CD4-positive, alpha-beta memory T cell (primary cell): ENCODE measurements at regions of chr7 and their contacts with region 1.

Region 1: GRCh38 chr7:98021588-98022351 is 31.8 kb upstream of the OCM2 start:
- DNase-seq: peak; percentile 61 to 69 (median 64)
- H3K4me3 ChIP-seq: no peak overlapping the region
- H3K4me3 Mint-ChIP-seq: no peak overlapping the region
- H3K27ac ChIP-seq: no peak overlapping the region
- H3K27ac Mint-ChIP-seq: peak overlapping the region in 2 of 7 donors; percentile 34 to 37
- H3K4me1 ChIP-seq: no peaks in the 10 kb centered on the region
- H3K4me1 Mint-ChIP-seq: peaks cover 0 to 5% (median 4%) of the 10 kb centered on the region in 4 donors
- H3K27me3 ChIP-seq: no peaks in the 10 kb centered on the region
- H3K27me3 Mint-ChIP-seq: peaks cover 2 to 13% of the 10 kb centered on the region in 2 donors

Region 2: DNA sequence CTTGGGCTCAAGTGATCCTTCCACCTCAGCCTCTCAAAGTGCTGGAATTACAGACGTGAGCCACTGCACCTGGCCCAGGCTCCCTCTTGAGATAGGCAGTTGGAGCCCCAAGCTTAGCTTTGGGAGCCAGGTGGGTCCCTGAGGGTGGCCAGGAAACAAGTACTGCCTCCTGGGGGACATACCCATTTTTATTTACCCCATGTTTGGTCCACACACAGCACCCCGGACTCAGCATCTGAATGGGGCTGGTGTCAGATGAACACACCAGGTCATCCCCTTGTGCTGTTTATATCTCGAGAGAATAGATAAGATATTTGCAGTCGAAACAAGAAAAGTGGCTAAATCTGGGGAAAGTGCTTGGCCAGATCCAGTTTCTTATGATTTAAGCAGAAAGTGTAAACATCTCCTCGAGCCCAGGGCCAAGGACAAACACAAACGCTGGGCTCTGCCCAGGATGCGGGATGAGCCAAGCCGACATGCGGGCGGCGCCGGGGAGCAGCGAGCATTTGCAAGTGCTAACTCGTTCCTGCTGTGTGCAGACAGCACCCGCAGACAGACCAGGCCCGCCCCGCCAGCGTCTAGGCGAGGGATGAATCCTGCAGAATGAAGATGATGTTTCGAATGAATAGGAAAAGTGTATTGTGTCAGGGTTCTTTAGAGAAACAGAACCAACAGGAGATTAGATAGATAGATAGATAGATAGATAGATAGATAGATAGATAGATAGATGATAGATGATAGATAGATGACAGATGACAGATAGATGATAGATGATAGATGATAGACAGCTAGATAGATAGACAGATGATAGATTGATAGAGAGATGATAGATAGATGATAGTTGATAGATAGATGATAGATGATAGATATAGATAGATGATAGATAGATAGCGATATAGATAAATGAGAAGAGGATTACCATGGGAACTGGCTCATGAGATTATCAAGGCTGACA is 12.6 kb after region 1 on chr7:
- CTCF ChIA-PET with region 1: interaction called, 16 read pairs
- POLR2A ChIA-PET with region 1: no interaction called
- intact Hi-C with region 1: no loop called
- DNase-seq: no peak
- H3K4me3 ChIP-seq: no peak overlapping the region
- H3K4me3 Mint-ChIP-seq: no peak overlapping the region
- H3K27ac ChIP-seq: no peak overlapping the region
- H3K27ac Mint-ChIP-seq: no peak overlapping the region
- H3K4me1 ChIP-seq: no peaks in the 10 kb centered on the region
- H3K4me1 Mint-ChIP-seq: peaks cover 0 to 2% (median 0%) of the 10 kb centered on the region in 4 donors
- H3K27me3 ChIP-seq: no peaks in the 10 kb centered on the region
- H3K27me3 Mint-ChIP-seq: peaks cover 2 to 4% of the 10 kb centered on the region in 2 donors

Region 3: GRCh38 chr7:98669329-98670000 is 647.7 kb after region 1 on chr7:
- CTCF ChIA-PET with region 1: no interaction called
- POLR2A ChIA-PET with region 1: no interaction called
- intact Hi-C with region 1: no loop called
- DNase-seq: no peak
- H3K4me3 ChIP-seq: no peak overlapping the region
- H3K4me3 Mint-ChIP-seq: no peak overlapping the region
- H3K27ac ChIP-seq: no peak overlapping the region
- H3K27ac Mint-ChIP-seq: no peak overlapping the region
- H3K4me1 ChIP-seq: no peaks in the 10 kb centered on the region
- H3K4me1 Mint-ChIP-seq: no peaks in the 10 kb centered on the region
- H3K27me3 ChIP-seq: no peaks in the 10 kb centered on the region
- H3K27me3 Mint-ChIP-seq: peaks cover 0 to 3% of the 10 kb centered on the region in 2 donors